ENCODE measurements at regions of chr21 and their contacts with region 1.

Region 1: GRCh38 chr21:33588485-33589335 is at the start of gene DONSON:
- DNase-seq: peak; percentile 83
- ATAC-seq: peak; percentile 94
- H3K4me3 Mint-ChIP-seq: peak within 1 kb of the TSS; percentile 93
- H3K27ac Mint-ChIP-seq: peak within 1 kb of the TSS; percentile 86
- H3K4me1 Mint-ChIP-seq: peaks cover 15% of the 10 kb centered on the region
- H3K27me3 Mint-ChIP-seq: no peaks in the 10 kb centered on the region
- CTCF ChIP-seq: no peak
- total RNA-seq, gene DONSON: 36.8 to 41.5 TPM

Region 2: GRCh38 chr21:33572350-33572749 is 16.4 kb before region 1 on chr21:
- CTCF ChIA-PET with region 1: interaction called, 7 read pairs
- POLR2A ChIA-PET with region 1: interaction called, 10 read pairs
- intact Hi-C with region 1: no loop called
- DNase-seq: no peak
- ATAC-seq: no peak
- H3K4me3 Mint-ChIP-seq: no peak overlapping the region
- H3K27ac Mint-ChIP-seq: peak overlapping the region; percentile 58
- H3K4me1 Mint-ChIP-seq: peaks cover 22% of the 10 kb centered on the region
- H3K27me3 Mint-ChIP-seq: no peaks in the 10 kb centered on the region
- CTCF ChIP-seq: no peak